A549 (cell line): ENCODE measurements at regions of chr9 and their contacts with region 1.

Region 1: DNA sequence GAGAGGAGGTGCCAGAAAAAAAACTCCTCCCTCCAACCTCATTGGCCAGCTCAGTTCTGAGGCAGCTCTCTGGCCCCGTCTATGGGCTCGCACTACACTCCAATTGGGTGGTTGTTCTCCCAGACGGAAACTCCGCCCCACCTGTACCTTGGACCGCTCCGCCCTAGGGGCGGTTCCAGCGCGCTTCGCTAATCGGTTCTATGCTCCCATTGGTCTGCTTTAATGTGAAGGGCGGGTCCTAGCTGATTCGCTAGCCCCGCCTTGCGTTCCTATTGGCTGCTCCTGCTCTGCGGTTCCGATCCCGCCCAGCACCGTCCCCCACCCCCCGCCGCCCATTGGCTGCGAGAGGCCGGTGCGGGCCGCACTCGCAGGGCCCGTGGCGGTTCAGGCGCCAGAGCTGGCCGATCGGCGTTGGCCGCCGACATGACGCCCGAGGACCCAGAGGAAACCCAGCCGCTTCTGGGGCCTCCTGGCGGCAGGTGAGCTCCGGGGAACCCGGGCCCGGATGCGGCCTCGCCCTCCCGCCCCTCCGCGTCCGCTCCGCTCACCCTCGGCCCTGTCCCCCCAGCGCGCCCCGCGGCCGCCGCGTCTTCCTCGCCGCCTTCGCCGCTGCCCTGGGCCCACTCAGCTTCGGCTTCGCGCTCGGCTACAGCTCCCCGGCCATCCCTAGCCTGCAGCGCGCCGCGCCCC is at the start of gene SLC2A8:
- DNase-seq: peak; percentile 96 to 99
- ATAC-seq: peak; percentile 87 to 96
- H3K4me3 ChIP-seq: peak within 1 kb of the TSS; percentile 90
- H3K27ac ChIP-seq: peak within 1 kb of the TSS; percentile 80 to 90
- H3K4me1 ChIP-seq: peaks cover 6% of the 10 kb centered on the region; the same call in 1 of the 3 replicates
- CTCF ChIP-seq: no peak; the same call in 2 of the 3 replicates
- EP300 ChIP-seq: no peak
- POLR2A ChIP-seq: peak; percentile 82
- RAD21 ChIP-seq: peak in 1 of 2 experiments; percentile 43; a peak in 1 of 5 replicates
- polyA plus RNA-seq, gene SLC2A8: 7.3 and 8.3 TPM in 2 replicates

Region 2: GRCh38 chr9:127214421-127215267 is 182.3 kb before region 1 on chr9:
- CTCF ChIA-PET with region 1: interaction called, 33 read pairs
- POLR2A ChIA-PET with region 1: no interaction called
- DNase-seq: peak; percentile 58 to 87
- ATAC-seq: peak; percentile 81 to 87
- H3K4me3 ChIP-seq: no peak overlapping the region
- H3K27ac ChIP-seq: no peak overlapping the region
- H3K4me1 ChIP-seq: no peaks in the 10 kb centered on the region
- CTCF ChIP-seq: peak; percentile 79
- EP300 ChIP-seq: no peak
- POLR2A ChIP-seq: no peak
- RAD21 ChIP-seq: peak; percentile 77 to 80

Region 3: GRCh38 chr9:127244609-127245601 is 152.0 kb before region 1 on chr9:
- CTCF ChIA-PET with region 1: interaction called, 4 read pairs
- POLR2A ChIA-PET with region 1: interaction called, 10 read pairs
- DNase-seq: peak; percentile 93 to 98
- ATAC-seq: peak; percentile 100
- H3K4me3 ChIP-seq: peak overlapping the region; percentile 62
- H3K27ac ChIP-seq: peak overlapping the region; percentile 84 to 90
- H3K4me1 ChIP-seq: peaks cover 10% of the 10 kb centered on the region; the same call in 2 of the 3 replicates
- CTCF ChIP-seq: no peak
- EP300 ChIP-seq: no peak
- POLR2A ChIP-seq: peak; percentile 81
- RAD21 ChIP-seq: no peak

Region 4: GRCh38 chr9:127336738-127337251 is 60.2 kb before region 1 on chr9:
- CTCF ChIA-PET with region 1: interaction called, 12 read pairs
- POLR2A ChIA-PET with region 1: no interaction called
- DNase-seq: peak; percentile 80 to 88
- ATAC-seq: peak; percentile 93 to 94
- H3K4me3 ChIP-seq: no peak overlapping the region; the same call in 2 of the 3 replicates
- H3K27ac ChIP-seq: peak overlapping the region; percentile 76 to 84
- H3K4me1 ChIP-seq: peaks cover 34% of the 10 kb centered on the region
- CTCF ChIP-seq: no peak
- EP300 ChIP-seq: peak in 1 of 2 experiments; percentile 52; a peak in 1 of 5 replicates
- POLR2A ChIP-seq: no peak
- RAD21 ChIP-seq: no peak; a peak in 1 of 5 replicates

Region 5: GRCh38 chr9:127360829-127361228 is 36.1 kb before region 1 on chr9:
- CTCF ChIA-PET with region 1: interaction called, 20 read pairs
- POLR2A ChIA-PET with region 1: no interaction called
- DNase-seq: peak; percentile 38 to 40
- ATAC-seq: peak; percentile 90 to 91
- H3K4me3 ChIP-seq: no peak overlapping the region
- H3K27ac ChIP-seq: 0 out of 6 replicates have a peak overlapping the region, but pooled peaks of 1 of the 2 experiments have one; percentile 8
- H3K4me1 ChIP-seq: no peaks in the 10 kb centered on the region
- CTCF ChIP-seq: peak; percentile 31; the same call in 2 of the 3 replicates
- EP300 ChIP-seq: no peak
- POLR2A ChIP-seq: no peak
- RAD21 ChIP-seq: peak; percentile 52 to 71; a peak in 4 of 5 replicates

Region 6: GRCh38 chr9:127406799-127407509 is 10.0 kb after region 1 on chr9:
- CTCF ChIA-PET with region 1: interaction called, 18 read pairs
- POLR2A ChIA-PET with region 1: no interaction called
- DNase-seq: no peak
- ATAC-seq: peak in 1 of 2 experiments; percentile 32; a peak in 4 of 6 replicates
- H3K4me3 ChIP-seq: no peak overlapping the region
- H3K27ac ChIP-seq: no peak overlapping the region
- H3K4me1 ChIP-seq: no peaks in the 10 kb centered on the region
- CTCF ChIP-seq: no peak
- EP300 ChIP-seq: no peak
- POLR2A ChIP-seq: no peak
- RAD21 ChIP-seq: no peak

Region 7: GRCh38 chr9:127450830-127451724 is 54.1 kb after region 1 on chr9 and contains the starts of genes LRSAM1 and RPL12:
- CTCF ChIA-PET with region 1: no interaction called
- POLR2A ChIA-PET with region 1: interaction called, 25 read pairs
- DNase-seq: peak; percentile 96 to 97
- ATAC-seq: peak; percentile 72 to 77
- H3K4me3 ChIP-seq: peak within 1 kb of the TSS; percentile 98
- H3K27ac ChIP-seq: peak within 1 kb of the TSS; percentile 96 to 99
- H3K4me1 ChIP-seq: peaks cover 17% of the 10 kb centered on the region
- CTCF ChIP-seq: no peak
- EP300 ChIP-seq: no peak
- POLR2A ChIP-seq: peak; percentile 99
- RAD21 ChIP-seq: no peak
- polyA plus RNA-seq, gene LRSAM1: 5.1 and 6.4 TPM in 2 replicates
- polyA plus RNA-seq, gene RPL12: 1,891 and 2,198 TPM in 2 replicates

Region 8: DNA sequence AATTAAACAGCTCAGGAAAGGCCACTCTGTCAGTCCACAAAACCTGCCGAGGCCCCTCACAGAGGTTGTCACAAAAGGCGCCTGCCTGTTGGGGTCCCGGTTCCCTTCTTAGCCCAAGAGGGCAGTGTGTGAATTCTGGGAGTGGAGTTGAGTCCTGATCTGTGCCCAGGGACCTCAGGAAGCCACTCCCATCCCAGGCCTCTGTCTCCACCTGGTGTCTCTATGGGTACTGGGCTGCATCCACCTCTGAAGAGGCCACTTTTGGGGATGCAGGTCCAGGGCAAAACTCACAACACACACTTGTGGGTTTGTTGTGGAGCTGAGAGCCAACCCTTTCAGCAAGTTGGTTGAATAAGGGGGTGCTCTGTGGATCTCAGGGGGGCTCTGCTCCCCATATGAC is 140.8 kb after region 1 on chr9:
- CTCF ChIA-PET with region 1: no interaction called
- POLR2A ChIA-PET with region 1: no interaction called
- DNase-seq: no peak
- ATAC-seq: peak; percentile 71 to 75; a peak in 5 of 6 replicates
- H3K4me3 ChIP-seq: no peak overlapping the region
- H3K27ac ChIP-seq: peak overlapping the region in 1 of 2 experiments; percentile 66; a peak in 3 of 6 replicates
- H3K4me1 ChIP-seq: peaks cover 65% of the 10 kb centered on the region
- CTCF ChIP-seq: peak; percentile 30; the same call in 2 of the 3 replicates
- EP300 ChIP-seq: no peak
- POLR2A ChIP-seq: no peak
- RAD21 ChIP-seq: peak; percentile 43 to 63